HEK293T (cell line): ENCODE measurements at regions of chr7 and their contacts with region 1.

Region 1: DNA sequence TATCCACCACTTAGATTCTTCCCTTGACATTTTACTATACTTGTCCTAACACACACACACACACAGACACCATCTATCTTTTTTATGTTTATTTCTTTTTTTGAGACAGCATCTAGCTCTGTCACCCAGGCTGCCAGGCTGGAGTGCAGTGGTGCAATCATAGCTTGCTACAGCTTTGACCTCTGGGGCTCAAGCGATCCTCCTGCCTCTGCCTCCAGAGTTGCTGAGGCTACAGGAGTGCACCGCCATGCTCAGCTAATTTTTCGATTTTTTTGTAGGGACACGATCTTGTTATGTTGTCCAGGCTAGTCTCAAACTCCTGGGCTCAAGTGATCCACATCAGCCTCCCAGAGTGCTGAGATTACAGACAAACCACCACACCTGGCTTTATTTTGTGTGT is 16.7 kb downstream of the WIPI2 start:
- DNase-seq: no peak

Region 2: GRCh38 chr7:5822742-5823503 is 616.2 kb after region 1 on chr7:
- CTCF ChIA-PET with region 1: interaction called, 14 read pairs
- POLR2A ChIA-PET with region 1: no interaction called
- DNase-seq: peak; percentile 92